ENCODE measurements at regions of chr5 and their contacts with region 1.

Region 1: DNA sequence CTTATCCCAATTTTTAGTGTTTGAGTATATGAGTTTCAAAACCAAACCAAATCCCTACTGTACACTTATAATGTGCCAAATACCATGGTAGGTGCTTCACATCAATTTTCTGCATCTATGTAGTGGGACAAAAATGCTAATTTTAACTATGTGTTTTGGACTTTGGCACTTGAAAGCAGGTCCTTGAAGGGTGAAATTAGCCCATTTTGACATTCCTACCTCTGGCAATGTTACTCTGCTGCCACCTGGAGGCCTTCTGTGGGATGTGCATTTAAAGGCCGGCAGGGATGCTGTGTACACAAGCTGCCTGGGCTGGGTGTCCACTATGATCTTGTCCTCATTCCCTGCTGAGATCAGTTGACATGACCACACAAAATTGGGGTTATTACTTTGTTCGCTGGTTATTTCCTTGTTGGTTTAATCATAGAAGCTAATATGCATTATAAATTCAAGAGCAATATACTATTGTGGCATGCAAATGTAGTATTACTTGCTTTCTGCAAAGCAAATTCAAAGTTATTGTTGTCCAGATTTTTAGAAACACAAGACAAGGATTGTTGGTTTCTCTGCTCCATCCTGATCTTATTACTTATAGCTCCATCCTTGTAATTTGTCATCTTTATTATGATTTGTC is 166.8 kb downstream of the ARHGEF28 start:
- DNase-seq: peak; percentile 43
- ATAC-seq: peak; percentile 93
- H3K4me3 ChIP-seq: no peak overlapping the region
- H3K27ac ChIP-seq: no peak overlapping the region
- H3K4me1 ChIP-seq: no peaks in the 10 kb centered on the region
- H3K27me3 ChIP-seq: no peaks in the 10 kb centered on the region
- CTCF ChIP-seq: peak; percentile 80 to 97 (median 93)
- POLR2A ChIP-seq: no peak
- RAD21 ChIP-seq: peak; percentile 93

Region 2: GRCh38 chr5:73519531-73520283 is 273.1 kb before region 1 on chr5:
- CTCF ChIA-PET with region 1: no interaction called
- POLR2A ChIA-PET with region 1: no interaction called
- RAD21 ChIA-PET with region 1: no interaction called
- intact Hi-C with region 1: loop called (anchors 1 kb)
- DNase-seq: peak; percentile 85
- ATAC-seq: peak; percentile 99
- H3K4me3 ChIP-seq: peak overlapping the region; percentile 15 to 17; a peak in 2 of 4 replicates
- H3K27ac ChIP-seq: no peak overlapping the region
- H3K4me1 ChIP-seq: peaks cover 8 to 10% of the 10 kb centered on the region in 2 experiments; a peak in 2 of 4 replicates
- H3K27me3 ChIP-seq: no peaks in the 10 kb centered on the region
- CTCF ChIP-seq: peak; percentile 65 to 85 (median 82); a peak in 5 of 6 replicates
- POLR2A ChIP-seq: no peak
- RAD21 ChIP-seq: peak; percentile 83

Region 3: GRCh38 chr5:73591102-73591695 is 201.6 kb before region 1 on chr5:
- CTCF ChIA-PET with region 1: interaction called, 112 read pairs
- POLR2A ChIA-PET with region 1: no interaction called
- RAD21 ChIA-PET with region 1: interaction called, 11 read pairs
- intact Hi-C with region 1: loop called (anchors 1 kb)
- DNase-seq: peak; percentile 83
- ATAC-seq: peak; percentile 84
- H3K4me3 ChIP-seq: no peak overlapping the region
- H3K27ac ChIP-seq: no peak overlapping the region
- H3K4me1 ChIP-seq: no peaks in the 10 kb centered on the region
- H3K27me3 ChIP-seq: no peaks in the 10 kb centered on the region
- CTCF ChIP-seq: peak; percentile 59 to 85 (median 80); a peak in 5 of 6 replicates
- POLR2A ChIP-seq: no peak
- RAD21 ChIP-seq: peak; percentile 92

Region 4: GRCh38 chr5:74226716-74227485 is 434.1 kb after region 1 on chr5:
- CTCF ChIA-PET with region 1: no interaction called
- POLR2A ChIA-PET with region 1: no interaction called
- RAD21 ChIA-PET with region 1: no interaction called
- intact Hi-C with region 1: no loop called
- DNase-seq: no peak
- ATAC-seq: no peak
- H3K4me3 ChIP-seq: no peak overlapping the region
- H3K27ac ChIP-seq: no peak overlapping the region
- H3K4me1 ChIP-seq: peaks cover 0 to 4% of the 10 kb centered on the region in 2 experiments; a peak in 1 of 4 replicates
- H3K27me3 ChIP-seq: no peaks in the 10 kb centered on the region
- CTCF ChIP-seq: no peak
- POLR2A ChIP-seq: no peak
- RAD21 ChIP-seq: no peak